Astrocyte of the cerebellum (primary cell): ENCODE measurements at regions of chr17 and their contacts with region 1.

Region 1: DNA sequence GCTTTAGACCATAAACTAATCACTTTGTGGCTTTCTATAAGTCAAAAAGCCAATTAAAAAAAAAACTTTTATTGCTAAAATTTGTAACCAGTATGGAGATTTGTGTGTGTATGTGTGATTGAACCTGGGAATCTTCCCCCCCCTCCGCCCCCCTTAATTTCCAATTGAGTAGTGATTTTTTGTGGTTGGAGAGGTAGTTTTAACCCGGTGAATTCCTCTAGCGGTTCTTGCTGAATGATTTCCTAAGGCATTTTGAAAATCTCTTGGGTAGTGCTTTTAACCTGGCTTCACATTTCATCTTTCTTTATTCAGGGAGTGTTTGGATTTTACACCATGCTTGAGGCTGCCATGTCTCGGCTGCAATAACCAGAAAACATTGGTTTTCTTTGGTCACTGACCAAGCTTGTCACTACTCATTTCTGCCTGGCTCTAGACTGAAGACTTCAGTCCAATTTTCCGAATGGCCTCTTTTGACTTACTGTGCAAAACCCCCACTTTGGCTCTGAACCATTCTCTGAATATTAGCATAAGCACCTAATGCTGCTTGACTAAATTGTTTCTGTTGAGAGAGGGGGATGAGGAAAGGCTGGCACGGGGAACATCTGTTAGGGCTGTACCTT is 35.6 kb downstream of the PRKCA start:
- DNase-seq: peak; percentile 73
- H3K4me3 ChIP-seq: peak overlapping the region; percentile 2
- CTCF ChIP-seq: no peak

Region 2: DNA sequence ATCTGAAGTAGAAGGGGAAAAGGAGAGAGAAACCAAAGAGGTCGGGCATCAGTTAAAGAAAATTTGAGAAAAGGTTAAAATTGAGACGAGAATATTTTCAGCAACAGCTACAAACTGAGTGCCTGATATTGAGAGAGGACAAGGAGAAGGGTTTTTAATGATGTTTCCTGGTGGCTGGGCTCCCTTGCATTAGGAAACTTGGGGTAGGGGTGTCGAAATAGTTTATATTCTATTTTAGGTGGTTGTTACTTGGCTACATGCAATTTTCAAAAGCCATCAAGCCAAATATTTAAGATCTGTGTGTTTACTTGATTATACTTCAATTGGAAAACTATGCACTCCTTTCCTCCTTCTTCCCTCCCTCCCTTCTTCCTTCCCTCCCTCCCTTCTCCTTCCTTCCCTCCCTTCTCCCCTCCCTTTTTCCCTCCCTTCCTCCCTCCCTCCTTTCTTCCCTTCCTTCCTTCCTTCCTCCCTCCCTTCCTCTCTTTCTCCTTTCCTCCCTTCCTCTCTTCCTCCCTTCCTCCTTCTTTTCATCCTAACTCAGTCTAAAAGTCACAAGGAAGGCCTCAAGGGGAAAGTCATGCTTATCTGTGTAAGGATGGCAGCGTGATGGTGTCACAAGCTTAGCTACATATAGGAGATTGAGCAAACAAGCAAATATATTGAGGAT is 106.9 kb before region 1 on chr17:
- in situ Hi-C with region 1: loop called (anchors 5 kb)
- DNase-seq: no peak
- H3K4me3 ChIP-seq: no peak overlapping the region
- CTCF ChIP-seq: no peak

Region 3: DNA sequence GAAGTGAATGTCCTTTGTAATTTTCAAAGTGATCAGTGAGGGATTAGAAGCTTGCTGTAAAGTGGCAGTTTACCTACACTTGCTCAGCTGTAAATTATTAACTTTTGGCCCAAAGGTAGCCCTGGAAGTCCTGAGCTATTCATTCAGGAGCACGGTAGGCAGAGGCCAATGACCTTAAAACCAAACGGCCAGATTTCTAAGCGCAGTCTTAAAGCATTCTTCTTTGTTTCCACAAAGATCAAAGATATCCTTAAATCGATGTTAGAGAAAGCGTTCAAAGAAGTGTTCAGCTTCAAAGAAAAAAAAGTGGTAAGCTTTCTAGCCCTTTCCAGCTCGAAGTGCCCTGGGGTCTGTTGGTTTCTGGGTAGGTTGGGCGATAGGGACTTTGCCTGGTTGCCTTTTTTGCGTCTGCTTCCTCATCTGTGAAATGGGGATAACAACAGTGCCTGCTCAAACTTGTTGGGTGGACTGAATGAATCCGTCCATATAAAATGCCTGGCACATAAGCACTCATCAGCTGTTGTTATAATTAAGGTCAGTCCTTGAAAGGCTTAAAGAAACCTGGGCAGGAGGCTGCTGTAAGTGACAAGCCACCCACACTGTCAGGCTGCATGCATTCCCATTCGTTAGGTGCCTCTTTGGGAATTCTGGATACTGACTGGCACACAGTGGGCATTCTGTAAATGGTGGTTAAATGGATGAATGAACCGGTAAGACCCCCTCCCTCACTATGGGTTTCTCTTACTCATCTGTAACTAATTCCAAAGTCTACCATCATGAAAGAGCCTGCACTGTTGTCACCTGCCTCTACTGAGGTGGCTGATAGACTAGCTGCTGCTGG is 77.6 kb after region 1 on chr17:
- in situ Hi-C with region 1: loop called (anchors 5 kb)
- DNase-seq: no peak
- H3K4me3 ChIP-seq: no peak overlapping the region
- CTCF ChIP-seq: no peak